Activated T-helper 2 cell treated with anti-CD3 and anti-CD28 coated beads, Interferon-gamma antibody, Interleukin-2, Interleukin-4, amounts not matched to agents 10 μg/mL and 5 μg/mL and 100 μg/mL, durations not matched to agents 14 hours and 24 hours and 36 hours (primary cell): ENCODE measurements at regions of chr11 and their contacts with region 1.

Region 1: DNA sequence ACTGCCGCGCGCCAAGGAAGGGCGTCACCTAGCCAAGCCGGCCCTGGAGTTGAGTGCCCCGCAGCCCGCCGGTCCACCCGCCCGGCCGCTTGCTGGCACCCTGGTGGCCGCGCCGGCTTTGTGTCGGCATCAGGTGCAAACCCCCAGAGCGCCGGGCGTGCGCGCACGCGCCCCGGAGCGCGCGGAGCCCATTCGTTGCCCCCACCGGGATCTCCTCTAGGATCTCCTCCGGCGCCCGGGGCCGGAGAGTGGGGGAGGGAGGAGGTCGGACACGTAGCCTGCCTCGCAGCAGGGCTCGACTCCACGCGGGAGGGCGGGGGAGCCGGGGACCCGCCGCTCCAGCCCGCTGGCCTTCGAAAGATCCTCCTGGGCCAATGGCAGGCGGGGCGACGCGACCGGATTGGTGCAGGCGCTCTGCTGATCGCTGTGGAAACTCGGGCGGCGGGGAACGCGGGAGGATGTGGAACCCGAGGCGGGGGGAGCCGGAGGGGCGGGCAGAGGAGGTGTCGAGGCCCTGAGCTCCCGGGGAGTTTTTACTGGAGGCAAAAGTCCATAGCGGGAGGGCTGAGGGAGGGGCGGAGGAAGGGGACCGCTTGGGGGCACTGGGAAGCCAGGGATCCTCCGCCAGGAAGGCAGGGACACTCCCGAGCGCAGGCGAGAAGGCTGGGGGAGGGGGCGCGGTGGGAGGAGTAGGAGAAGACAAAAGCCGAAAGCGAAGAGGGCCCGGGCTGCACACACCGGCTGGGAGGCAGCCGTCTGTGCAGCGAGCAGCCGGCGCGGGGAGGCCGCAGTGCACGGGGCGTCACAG is at the start of gene FADS2:
- DNase-seq: peak; percentile 91
- H3K4me3 Mint-ChIP-seq: peak within 1 kb of the TSS; percentile 97
- H3K27ac Mint-ChIP-seq: peak within 1 kb of the TSS; percentile 95
- H3K4me1 Mint-ChIP-seq: peaks cover 44% of the 10 kb centered on the region
- H3K27me3 Mint-ChIP-seq: no peaks in the 10 kb centered on the region
- total RNA-seq, gene FADS2: 366 and 381 TPM in 2 replicates

Region 2: DNA sequence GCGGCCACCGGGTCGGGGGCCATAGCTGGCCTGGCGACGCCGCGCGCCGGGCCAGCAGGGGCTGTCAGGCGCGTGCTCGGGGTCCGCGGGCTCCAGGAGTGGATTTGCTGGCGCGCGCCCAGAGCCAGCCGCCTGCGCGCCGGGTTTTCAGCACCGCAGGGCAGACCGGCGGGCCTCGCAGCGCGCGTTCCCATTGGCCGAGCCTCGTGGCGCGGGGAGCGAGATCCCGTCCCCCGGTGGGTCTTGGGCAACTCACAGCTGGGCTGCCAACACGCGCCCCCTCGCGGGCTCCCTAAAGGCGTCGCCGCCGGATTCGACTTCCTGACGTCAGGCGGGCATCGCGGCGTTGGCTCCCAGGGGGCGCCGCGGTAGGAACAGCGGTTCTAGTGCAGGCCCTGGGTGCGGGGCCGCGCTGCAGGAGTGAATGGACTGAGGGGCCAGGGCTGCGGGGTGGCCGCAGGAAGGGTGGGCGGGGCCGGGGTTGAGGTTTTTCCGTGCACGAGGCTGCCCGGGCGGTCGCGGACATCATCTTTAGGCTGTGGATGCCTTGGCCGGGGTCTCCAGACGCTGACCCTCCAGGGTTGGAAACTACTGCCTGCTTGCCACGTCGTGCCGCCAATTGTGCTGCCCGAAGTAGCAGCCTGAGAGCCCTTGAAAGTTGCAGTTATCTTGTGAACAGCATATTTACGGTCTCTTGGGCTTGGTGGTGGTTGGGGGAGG is 10.9 kb before region 1 on chr11 and contains the start of gene FADS1:
- intact Hi-C with region 1: loop called (anchors 1 kb)
- DNase-seq: peak; percentile 84
- H3K4me3 Mint-ChIP-seq: peak within 1 kb of the TSS; percentile 99
- H3K27ac Mint-ChIP-seq: peak within 1 kb of the TSS; percentile 96
- H3K4me1 Mint-ChIP-seq: peaks cover 20% of the 10 kb centered on the region
- H3K27me3 Mint-ChIP-seq: no peaks in the 10 kb centered on the region
- total RNA-seq, gene FADS1: 114 and 116 TPM in 2 replicates